Colonic mucosa (tissue), 4 donors: ENCODE measurements at regions of chr17 and their contacts with region 1.

Region 1: GRCh38 chr17:79707931-79708891 is 22.5 kb upstream of the ENPP7 start:
- DNase-seq: peak; percentile 49
- H3K4me3 ChIP-seq: no peak overlapping the region
- H3K27ac ChIP-seq: no peak overlapping the region
- H3K4me1 ChIP-seq: no peaks in the 10 kb centered on the region
- H3K27me3 ChIP-seq: no peaks in the 10 kb centered on the region
- CTCF ChIP-seq: peak; percentile 73

Region 2: GRCh38 chr17:79413611-79414010 is 294.6 kb before region 1 on chr17:
- intact Hi-C with region 1: loop called (anchors 10 kb)
- DNase-seq: no peak
- H3K4me3 ChIP-seq: no peak overlapping the region
- H3K27ac ChIP-seq: no peak overlapping the region
- H3K4me1 ChIP-seq: no peaks in the 10 kb centered on the region
- H3K27me3 ChIP-seq: no peaks in the 10 kb centered on the region
- CTCF ChIP-seq: no peak

Region 3: DNA sequence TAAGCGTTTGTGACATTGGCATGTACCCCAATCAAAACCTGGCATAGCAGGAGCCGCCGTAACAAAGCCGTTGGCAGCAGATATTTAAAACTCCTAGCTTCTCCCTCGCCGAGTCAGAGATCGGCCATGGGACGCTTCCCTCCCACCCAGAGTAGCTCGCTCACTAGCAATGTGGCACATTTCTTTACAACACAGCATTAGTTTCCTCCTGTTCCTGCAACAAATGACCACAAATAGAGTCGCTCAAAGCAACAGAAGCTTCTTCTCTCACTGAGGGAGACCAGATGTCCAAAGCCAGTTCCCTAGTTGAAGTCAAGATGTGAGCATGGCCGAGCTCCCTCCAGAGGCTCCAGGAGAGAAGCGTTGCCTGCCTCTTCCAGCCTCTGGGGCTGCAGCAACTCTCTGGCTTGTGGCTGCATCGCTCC is 204.0 kb before region 1 on chr17:
- intact Hi-C with region 1: no loop called
- DNase-seq: no peak
- H3K4me3 ChIP-seq: no peak overlapping the region
- H3K27ac ChIP-seq: no peak overlapping the region
- H3K4me1 ChIP-seq: no peaks in the 10 kb centered on the region
- H3K27me3 ChIP-seq: no peaks in the 10 kb centered on the region
- CTCF ChIP-seq: no peak

Region 4: GRCh38 chr17:79589669-79590522 is 118.3 kb before region 1 on chr17:
- intact Hi-C with region 1: no loop called
- DNase-seq: no peak
- H3K4me3 ChIP-seq: no peak overlapping the region
- H3K27ac ChIP-seq: no peak overlapping the region
- H3K4me1 ChIP-seq: no peaks in the 10 kb centered on the region
- H3K27me3 ChIP-seq: no peaks in the 10 kb centered on the region
- CTCF ChIP-seq: no peak